ENCODE measurements at regions of chr1 and their contacts with region 1.

Region 1: DNA sequence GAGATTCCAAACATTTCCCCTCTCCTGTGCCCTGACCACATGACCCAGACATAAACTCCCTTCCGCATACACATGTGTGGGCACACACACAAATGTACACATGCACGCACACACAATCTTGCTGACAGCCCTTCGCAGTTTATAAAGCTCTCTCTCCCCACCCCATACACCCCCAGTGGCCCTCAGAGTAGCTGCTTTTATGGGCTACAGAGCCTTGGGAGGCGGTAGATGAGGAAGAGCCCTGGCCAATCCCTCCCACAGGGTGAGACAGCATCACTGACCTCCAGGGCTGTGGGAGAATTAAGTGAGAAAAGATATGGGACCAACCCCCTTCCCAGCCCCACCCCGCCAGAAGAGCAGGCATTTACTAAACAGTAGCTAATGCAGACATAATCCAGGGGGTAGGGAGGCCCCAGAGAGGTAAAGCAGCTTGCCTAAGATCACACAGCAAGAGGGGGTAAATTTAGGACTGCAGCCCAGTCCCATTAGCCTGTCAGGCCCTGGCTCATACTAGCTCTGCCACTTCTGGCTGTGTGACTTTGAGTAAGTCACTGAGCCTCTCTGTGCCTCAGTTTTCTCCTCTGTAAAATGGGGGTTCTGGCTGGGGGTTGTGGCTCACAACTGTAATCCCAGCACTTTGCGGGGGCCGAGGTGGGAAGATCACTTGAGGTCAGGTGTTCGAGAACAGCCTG is 5.1 kb downstream of the SDC3 start:
- DNase-seq: no peak
- ATAC-seq: no peak
- H3K4me3 ChIP-seq: no peak overlapping the region
- H3K27ac ChIP-seq: no peak overlapping the region
- H3K4me1 ChIP-seq: peaks cover 19% of the 10 kb centered on the region
- H3K27me3 ChIP-seq: no peaks in the 10 kb centered on the region
- CTCF ChIP-seq: no peak
- POLR2A ChIP-seq: no peak

Region 2: GRCh38 chr1:30801771-30802198 is 101.7 kb before region 1 on chr1:
- intact Hi-C with region 1: loop called (anchors 2 kb)
- DNase-seq: peak; percentile 76 to 88 (median 83)
- ATAC-seq: peak; percentile 75
- H3K4me3 ChIP-seq: no peak overlapping the region
- H3K27ac ChIP-seq: no peak overlapping the region
- H3K4me1 ChIP-seq: peaks cover 18% of the 10 kb centered on the region
- H3K27me3 ChIP-seq: no peaks in the 10 kb centered on the region
- CTCF ChIP-seq: peak; percentile 89 to 93 (median 92)
- POLR2A ChIP-seq: no peak

Region 3: DNA sequence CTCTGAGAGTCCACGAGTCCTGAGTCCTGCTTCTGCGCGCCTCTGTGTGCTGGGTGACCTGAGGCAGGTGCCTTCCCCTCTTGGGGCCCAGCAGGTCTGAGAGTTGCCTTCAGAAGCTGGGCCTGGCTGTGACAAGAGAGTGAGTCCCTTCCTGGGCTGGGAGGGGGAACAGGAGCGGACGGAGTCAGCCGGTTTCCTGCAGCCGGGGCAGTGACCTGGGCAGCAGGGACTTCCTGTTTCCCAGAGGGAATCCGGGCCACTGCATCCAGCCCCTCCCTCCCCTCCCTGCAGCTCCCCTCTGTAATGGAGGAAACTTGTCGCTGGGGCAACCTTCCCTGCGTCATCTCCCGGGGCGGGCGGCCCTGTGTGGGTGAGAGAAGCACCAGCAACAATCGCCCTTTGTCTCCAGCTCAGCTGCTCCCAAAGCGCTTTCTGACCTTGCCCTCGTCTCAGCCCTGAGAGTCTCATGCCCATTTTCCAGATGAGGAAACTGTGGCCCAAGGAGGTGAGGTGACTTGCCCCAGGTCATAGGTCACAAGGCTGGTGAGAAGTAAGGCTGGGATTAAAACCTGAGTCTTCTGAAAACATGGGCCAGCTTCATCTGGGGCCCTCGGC is 56.0 kb before region 1 on chr1:
- intact Hi-C with region 1: no loop called
- DNase-seq: peak; percentile 72 to 84 (median 80)
- ATAC-seq: peak; percentile 91
- H3K4me3 ChIP-seq: no peak overlapping the region
- H3K27ac ChIP-seq: peak overlapping the region in 3 of 4 donors; percentile 73 to 77 (median 75)
- H3K4me1 ChIP-seq: peaks cover 9% of the 10 kb centered on the region
- H3K27me3 ChIP-seq: no peaks in the 10 kb centered on the region
- CTCF ChIP-seq: no peak
- POLR2A ChIP-seq: peak in 2 of 3 donors; percentile 13 to 59

Region 4: DNA sequence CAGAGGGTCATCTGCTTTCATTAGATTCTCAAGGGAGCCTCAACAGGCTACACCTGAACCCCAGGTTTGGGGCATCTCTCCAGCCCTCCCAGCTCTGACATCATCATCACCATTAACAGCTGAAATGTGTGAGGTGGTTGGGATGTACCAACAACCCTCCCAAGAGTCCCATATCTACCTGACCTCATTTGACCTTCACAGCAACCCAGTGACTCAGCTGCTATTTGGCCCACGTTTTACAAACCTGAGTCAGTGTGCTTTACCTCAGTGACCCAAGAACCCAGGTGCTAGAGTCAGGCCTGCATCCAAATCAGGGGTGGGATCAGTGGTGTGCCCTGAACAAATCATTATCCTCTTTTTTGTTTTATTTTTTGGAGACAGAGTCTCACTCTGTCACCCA is 619.5 kb after region 1 on chr1:
- intact Hi-C with region 1: no loop called
- DNase-seq: no peak
- ATAC-seq: no peak
- H3K4me3 ChIP-seq: no peak overlapping the region
- H3K27ac ChIP-seq: no peak overlapping the region
- H3K4me1 ChIP-seq: no peaks in the 10 kb centered on the region
- H3K27me3 ChIP-seq: no peaks in the 10 kb centered on the region
- CTCF ChIP-seq: no peak
- POLR2A ChIP-seq: no peak

Measured in body of pancreas (tissue), 4 donors.